GM23248 (cell line): ENCODE measurements at regions of chr13 and their contacts with region 1.

Region 1: GRCh38 chr13:46975173-46975572 is 78.3 kb upstream of the HTR2A start:
- DNase-seq: no peak
- H3K4me3 ChIP-seq: no peak overlapping the region
- H3K27ac ChIP-seq: no peak overlapping the region
- H3K4me1 ChIP-seq: no peaks in the 10 kb centered on the region
- H3K27me3 ChIP-seq: no peaks in the 10 kb centered on the region

Region 2: GRCh38 chr13:47598340-47598911 is 623.3 kb after region 1 on chr13:
- in situ Hi-C with region 1: loop called (anchors 10 kb)
- DNase-seq: peak; percentile 52
- H3K4me3 ChIP-seq: no peak overlapping the region
- H3K27ac ChIP-seq: no peak overlapping the region
- H3K4me1 ChIP-seq: no peaks in the 10 kb centered on the region
- H3K27me3 ChIP-seq: no peaks in the 10 kb centered on the region